GM12878 (cell line): ENCODE measurements at regions of chr5 and their contacts with region 1.

Region 1: GRCh38 chr5:56148453-56148971 is 84.6 kb downstream of the ANKRD55 start:
- DNase-seq: peak; percentile 96
- ATAC-seq: peak; percentile 92
- H3K4me3 ChIP-seq: no peak overlapping the region
- H3K27ac ChIP-seq: peak overlapping the region; percentile 54; the same call in 1 of the 2 replicates
- H3K4me1 ChIP-seq: peaks cover 23% of the 10 kb centered on the region
- H3K27me3 ChIP-seq: no peaks in the 10 kb centered on the region; a peak in 1 of 4 replicates
- CTCF ChIP-seq: no peak
- EP300 ChIP-seq: peak; percentile 89 to 92
- POLR2A ChIP-seq: no peak
- RAD21 ChIP-seq: no peak

Region 2: GRCh38 chr5:55988979-55989638 is 159.4 kb before region 1 on chr5:
- CTCF ChIA-PET with region 1: no interaction called
- POLR2A ChIA-PET with region 1: interaction called, 3 read pairs
- RAD21 ChIA-PET with region 1: interaction called, 9 read pairs
- SMC1A ChIA-PET with region 1: interaction called, 16 read pairs
- in situ Hi-C with region 1: loop called (anchors 5 kb)
- intact Hi-C with region 1: loop called (anchors 2 kb)
- DNase-seq: no peak
- ATAC-seq: peak; percentile 18
- H3K4me3 ChIP-seq: peak overlapping the region; percentile 31
- H3K27ac ChIP-seq: no peak overlapping the region
- H3K4me1 ChIP-seq: no peaks in the 10 kb centered on the region; the same call in 1 of the 2 replicates
- H3K27me3 ChIP-seq: no peaks in the 10 kb centered on the region
- CTCF ChIP-seq: no peak
- EP300 ChIP-seq: no peak
- POLR2A ChIP-seq: no peak
- RAD21 ChIP-seq: no peak

Region 3: GRCh38 chr5:56056875-56057274 is 91.6 kb before region 1 on chr5:
- CTCF ChIA-PET with region 1: interaction called, 6 read pairs
- POLR2A ChIA-PET with region 1: interaction called, 4 read pairs
- RAD21 ChIA-PET with region 1: interaction called, 9 read pairs
- SMC1A ChIA-PET with region 1: interaction called, 29 read pairs
- in situ Hi-C with region 1: no loop called
- intact Hi-C with region 1: no loop called
- DNase-seq: peak; percentile 85
- ATAC-seq: peak; percentile 78
- H3K4me3 ChIP-seq: 0 out of 2 replicates have a peak overlapping the region, but pooled peaks have one; percentile 8
- H3K27ac ChIP-seq: peak overlapping the region; percentile 47; the same call in 1 of the 2 replicates
- H3K4me1 ChIP-seq: peaks cover 41% of the 10 kb centered on the region
- H3K27me3 ChIP-seq: no peaks in the 10 kb centered on the region
- CTCF ChIP-seq: no peak
- EP300 ChIP-seq: peak in 1 of 2 experiments; percentile 48; a peak in 1 of 4 replicates
- POLR2A ChIP-seq: no peak
- RAD21 ChIP-seq: no peak

Region 4: DNA sequence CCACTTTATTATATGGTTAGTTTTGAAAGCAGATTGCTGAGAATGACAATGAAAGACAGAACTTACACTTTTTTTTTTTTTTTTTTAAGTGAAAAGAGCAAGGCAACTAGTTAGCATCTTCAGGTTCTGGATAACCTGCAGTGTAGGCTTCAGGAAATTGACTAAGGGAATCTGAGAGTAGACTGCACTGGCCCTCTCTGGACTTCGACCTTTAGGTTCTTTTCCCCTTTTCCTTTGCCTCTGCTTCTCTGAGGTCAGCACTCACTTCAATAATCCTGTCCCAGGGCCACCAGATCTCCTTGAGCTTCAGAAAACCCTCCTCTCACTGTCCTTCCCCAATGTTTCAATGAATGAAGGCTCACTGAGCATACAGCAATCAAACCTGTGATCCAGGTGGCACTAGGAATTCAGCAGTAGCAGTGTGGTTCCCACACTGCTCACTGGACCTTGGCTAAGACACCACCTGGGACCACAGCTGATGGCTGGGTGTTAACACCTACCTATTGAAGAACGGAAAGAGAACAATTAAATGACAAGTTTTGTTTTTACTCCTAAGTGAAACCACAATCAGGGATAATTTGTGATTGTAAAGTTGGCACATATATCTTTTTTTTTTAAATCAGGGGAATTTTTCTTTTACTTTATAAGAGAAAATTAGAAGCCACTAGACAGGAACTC is 68.0 kb before region 1 on chr5:
- CTCF ChIA-PET with region 1: interaction called, 7 read pairs
- POLR2A ChIA-PET with region 1: interaction called, 6 read pairs
- RAD21 ChIA-PET with region 1: interaction called, 21 read pairs
- SMC1A ChIA-PET with region 1: interaction called, 38 read pairs
- in situ Hi-C with region 1: no loop called
- intact Hi-C with region 1: no loop called
- DNase-seq: peak; percentile 98
- ATAC-seq: peak; percentile 82
- H3K4me3 ChIP-seq: no peak overlapping the region
- H3K27ac ChIP-seq: peak overlapping the region; percentile 84
- H3K4me1 ChIP-seq: peaks cover 21% of the 10 kb centered on the region
- H3K27me3 ChIP-seq: no peaks in the 10 kb centered on the region
- CTCF ChIP-seq: no peak
- EP300 ChIP-seq: peak; percentile 83 to 87
- POLR2A ChIP-seq: no peak
- RAD21 ChIP-seq: no peak

Region 5: DNA sequence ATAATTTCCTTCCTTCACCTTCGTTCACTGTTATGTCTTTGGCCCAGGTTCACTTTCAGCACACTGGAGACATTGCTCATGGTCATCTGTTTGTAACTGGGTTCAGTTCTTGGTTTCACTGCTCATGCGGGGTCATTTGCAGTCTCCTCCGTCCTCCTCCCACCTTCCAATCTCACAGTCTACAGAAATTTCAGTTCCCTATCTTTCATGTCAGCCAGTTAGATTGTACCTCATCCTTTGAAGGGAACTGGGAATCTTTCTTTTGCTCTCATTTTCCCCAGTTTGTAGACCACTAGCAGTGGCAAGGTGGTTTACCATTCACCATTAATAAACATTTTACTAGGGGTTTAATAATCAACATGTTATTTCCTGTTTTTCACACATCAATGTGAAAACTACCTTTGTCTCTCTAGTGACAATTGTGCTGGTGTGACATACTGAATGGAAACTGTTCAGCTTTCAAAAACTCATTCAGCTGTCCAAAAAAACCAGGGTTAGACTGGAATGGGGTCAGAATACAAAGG is 52.9 kb before region 1 on chr5:
- CTCF ChIA-PET with region 1: interaction called, 20 read pairs
- POLR2A ChIA-PET with region 1: interaction called, 16 read pairs
- RAD21 ChIA-PET with region 1: interaction called, 27 read pairs
- SMC1A ChIA-PET with region 1: interaction called, 206 read pairs
- in situ Hi-C with region 1: no loop called
- intact Hi-C with region 1: loop called (anchors 1 kb)
- DNase-seq: peak; percentile 96
- ATAC-seq: peak; percentile 87
- H3K4me3 ChIP-seq: no peak overlapping the region
- H3K27ac ChIP-seq: peak overlapping the region; percentile 76
- H3K4me1 ChIP-seq: peaks cover 21% of the 10 kb centered on the region
- H3K27me3 ChIP-seq: no peaks in the 10 kb centered on the region
- CTCF ChIP-seq: no peak
- EP300 ChIP-seq: peak; percentile 79 to 90
- POLR2A ChIP-seq: no peak
- RAD21 ChIP-seq: no peak

Region 6: DNA sequence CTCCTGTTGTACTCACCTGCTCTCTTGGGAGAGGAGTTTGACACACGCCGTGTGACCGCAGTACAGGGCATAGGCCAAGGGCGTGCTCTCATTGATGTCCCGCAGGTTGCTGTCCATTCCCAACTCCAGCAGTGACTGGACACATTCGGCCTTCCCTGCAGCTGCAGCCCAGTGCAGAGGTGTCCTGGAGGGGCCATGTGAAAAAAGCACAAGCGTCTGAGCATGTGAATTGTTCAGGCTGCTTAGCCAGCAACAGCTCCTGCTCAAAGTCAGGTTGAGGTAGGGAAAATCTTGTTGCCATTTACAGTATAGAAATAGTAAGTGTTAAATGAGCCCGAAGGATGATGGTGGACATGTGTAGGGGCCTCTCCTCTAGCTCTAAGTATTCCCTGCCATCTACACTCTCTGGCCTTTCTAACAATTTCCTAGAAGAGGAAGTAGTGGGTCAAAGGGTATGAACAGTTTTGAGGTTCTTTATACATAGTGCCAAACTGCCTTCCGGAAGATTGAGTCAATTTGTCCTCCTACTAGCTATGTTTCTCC is 31.8 kb before region 1 on chr5:
- CTCF ChIA-PET with region 1: no interaction called
- POLR2A ChIA-PET with region 1: no interaction called
- RAD21 ChIA-PET with region 1: no interaction called
- SMC1A ChIA-PET with region 1: no interaction called
- in situ Hi-C with region 1: no loop called
- intact Hi-C with region 1: no loop called
- DNase-seq: no peak
- ATAC-seq: no peak
- H3K4me3 ChIP-seq: no peak overlapping the region
- H3K27ac ChIP-seq: no peak overlapping the region
- H3K4me1 ChIP-seq: no peaks in the 10 kb centered on the region
- H3K27me3 ChIP-seq: no peaks in the 10 kb centered on the region
- CTCF ChIP-seq: no peak
- EP300 ChIP-seq: no peak
- POLR2A ChIP-seq: no peak
- RAD21 ChIP-seq: no peak

Region 7: DNA sequence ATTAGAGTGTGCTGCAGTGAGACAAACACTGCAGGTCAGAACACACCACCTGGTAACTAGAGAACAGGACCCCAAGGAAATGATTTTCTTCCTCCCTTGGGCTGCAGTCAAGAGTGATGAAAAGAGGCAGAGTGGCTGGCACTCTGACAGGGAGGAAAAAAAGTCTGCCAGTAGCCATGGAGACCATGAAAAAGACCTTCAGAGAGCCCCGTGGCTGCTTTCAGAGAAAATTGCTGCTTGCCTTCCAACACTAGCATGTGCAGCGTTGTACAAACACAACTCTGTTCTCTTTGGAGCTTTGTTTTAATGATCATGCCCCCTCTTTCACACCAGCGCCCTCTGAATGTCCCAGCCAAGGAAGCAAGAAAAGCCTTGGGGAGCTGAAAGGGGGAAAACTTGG is 15.9 kb after region 1 on chr5:
- CTCF ChIA-PET with region 1: interaction called, 5 read pairs
- POLR2A ChIA-PET with region 1: interaction called, 10 read pairs
- RAD21 ChIA-PET with region 1: interaction called, 5 read pairs
- SMC1A ChIA-PET with region 1: interaction called, 9 read pairs
- in situ Hi-C with region 1: no loop called
- intact Hi-C with region 1: no loop called
- DNase-seq: no peak
- ATAC-seq: no peak
- H3K4me3 ChIP-seq: no peak overlapping the region
- H3K27ac ChIP-seq: no peak overlapping the region
- H3K4me1 ChIP-seq: no peaks in the 10 kb centered on the region
- H3K27me3 ChIP-seq: no peaks in the 10 kb centered on the region; a peak in 2 of 4 replicates
- CTCF ChIP-seq: no peak
- EP300 ChIP-seq: no peak
- POLR2A ChIP-seq: no peak
- RAD21 ChIP-seq: no peak